Caco-2 (cell line): ENCODE measurements at regions of chr2 and their contacts with region 1.

Region 1: GRCh38 chr2:25878361-25879132 is at the start of gene ASXL2:
- DNase-seq: peak; percentile 98 to 99
- H3K4me3 ChIP-seq: peak within 1 kb of the TSS; percentile 65
- H3K4me3 Mint-ChIP-seq: peak within 1 kb of the TSS; percentile 99
- H3K27ac Mint-ChIP-seq: peak within 1 kb of the TSS; percentile 99
- H3K4me1 ChIP-seq: peaks cover 6% of the 10 kb centered on the region
- H3K4me1 Mint-ChIP-seq: peaks cover 30% of the 10 kb centered on the region
- H3K27me3 ChIP-seq: no peaks in the 10 kb centered on the region
- H3K27me3 Mint-ChIP-seq: no peaks in the 10 kb centered on the region
- CTCF ChIP-seq: no peak
- total RNA-seq, gene ASXL2: 35.7 and 41.1 TPM in 2 replicates

Region 2: DNA sequence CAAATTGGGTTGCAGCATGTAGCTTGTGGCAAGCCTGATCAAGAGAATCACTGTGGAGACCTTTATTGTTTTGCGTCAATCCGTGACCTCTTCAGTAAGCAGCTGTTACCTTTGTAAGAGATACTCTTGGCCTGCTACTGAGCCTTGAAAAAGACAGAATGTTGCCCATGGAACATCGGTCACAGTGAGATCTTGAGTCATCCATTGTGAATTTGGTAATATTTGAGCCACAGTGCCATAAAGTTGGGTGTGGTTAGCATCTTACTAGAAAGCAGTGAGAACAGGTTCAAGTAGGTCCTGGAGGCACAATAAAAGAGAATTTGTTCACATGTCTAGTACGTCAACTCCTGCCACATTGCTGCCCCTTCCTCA is 849.4 kb before region 1 on chr2:
- CTCF ChIA-PET with region 1: no interaction called
- POLR2A ChIA-PET with region 1: no interaction called
- intact Hi-C with region 1: no loop called
- DNase-seq: no peak
- H3K4me3 ChIP-seq: no peak overlapping the region
- H3K4me3 Mint-ChIP-seq: no peak overlapping the region
- H3K27ac Mint-ChIP-seq: no peak overlapping the region
- H3K4me1 ChIP-seq: no peaks in the 10 kb centered on the region
- H3K4me1 Mint-ChIP-seq: no peaks in the 10 kb centered on the region
- H3K27me3 ChIP-seq: no peaks in the 10 kb centered on the region
- H3K27me3 Mint-ChIP-seq: no peaks in the 10 kb centered on the region
- CTCF ChIP-seq: no peak

Region 3: GRCh38 chr2:25867396-25868003 is 11.0 kb before region 1 on chr2:
- CTCF ChIA-PET with region 1: no interaction called
- POLR2A ChIA-PET with region 1: interaction called, 14 read pairs
- intact Hi-C with region 1: no loop called
- DNase-seq: no peak
- H3K4me3 ChIP-seq: no peak overlapping the region
- H3K4me3 Mint-ChIP-seq: no peak overlapping the region
- H3K27ac Mint-ChIP-seq: peak overlapping the region; percentile 3
- H3K4me1 ChIP-seq: no peaks in the 10 kb centered on the region
- H3K4me1 Mint-ChIP-seq: no peaks in the 10 kb centered on the region
- H3K27me3 ChIP-seq: no peaks in the 10 kb centered on the region
- H3K27me3 Mint-ChIP-seq: no peaks in the 10 kb centered on the region
- CTCF ChIP-seq: no peak

Region 4: DNA sequence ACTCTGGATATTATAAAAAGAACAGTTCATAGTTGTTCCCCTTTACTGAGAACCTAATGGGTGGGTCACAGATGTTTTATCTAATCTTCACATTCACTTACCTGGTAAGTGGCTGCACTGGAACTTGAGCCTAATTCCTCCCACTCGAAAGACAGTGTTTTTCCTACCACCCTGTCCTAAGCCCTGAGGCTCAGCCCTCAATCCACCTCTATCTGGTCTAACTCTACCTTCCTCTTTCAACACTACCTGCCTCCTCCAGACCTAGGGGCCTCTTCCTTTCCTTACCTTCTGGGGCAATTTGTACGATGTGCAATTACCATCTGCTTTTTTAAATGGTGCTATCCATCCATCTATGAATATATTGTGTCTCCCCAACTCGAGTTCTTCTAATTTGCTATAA is 113.4 kb after region 1 on chr2:
- CTCF ChIA-PET with region 1: interaction called, 10 read pairs
- POLR2A ChIA-PET with region 1: interaction called, 3 read pairs
- intact Hi-C with region 1: no loop called
- DNase-seq: no peak
- H3K4me3 ChIP-seq: no peak overlapping the region
- H3K4me3 Mint-ChIP-seq: no peak overlapping the region
- H3K27ac Mint-ChIP-seq: peak overlapping the region; percentile 5
- H3K4me1 ChIP-seq: peaks cover 12% of the 10 kb centered on the region
- H3K4me1 Mint-ChIP-seq: peaks cover 23% of the 10 kb centered on the region
- H3K27me3 ChIP-seq: no peaks in the 10 kb centered on the region
- H3K27me3 Mint-ChIP-seq: no peaks in the 10 kb centered on the region
- CTCF ChIP-seq: no peak

Region 5: DNA sequence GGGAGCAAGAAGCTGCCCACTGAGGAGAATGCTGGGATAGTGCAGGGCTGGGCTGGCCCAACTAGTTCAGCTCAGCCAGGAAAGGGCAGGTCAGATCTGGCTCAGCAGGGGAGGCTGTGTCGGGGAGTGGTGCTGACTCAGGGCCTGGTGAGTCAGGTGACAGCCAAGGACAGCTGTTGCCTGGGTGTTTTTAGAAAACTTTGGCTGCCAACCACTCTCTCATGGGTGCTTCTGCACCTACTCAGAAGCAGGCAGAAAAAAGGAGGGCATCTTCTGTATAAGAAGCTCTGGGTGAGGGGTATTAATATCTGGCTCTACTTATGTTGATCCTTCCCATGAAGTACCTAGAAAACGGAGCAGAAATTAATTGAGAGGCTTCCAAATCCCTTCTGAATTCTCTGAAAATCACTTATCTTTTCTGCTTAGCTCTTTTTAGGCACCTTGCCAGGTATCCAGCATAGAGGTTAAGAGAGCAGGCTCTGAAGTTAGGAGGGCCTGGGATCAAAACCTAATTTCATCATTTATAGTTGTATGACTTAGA is 139.7 kb after region 1 on chr2:
- CTCF ChIA-PET with region 1: no interaction called
- POLR2A ChIA-PET with region 1: no interaction called
- intact Hi-C with region 1: loop called (anchors 10 kb)
- DNase-seq: peak; percentile 76 to 78
- H3K4me3 ChIP-seq: no peak overlapping the region
- H3K4me3 Mint-ChIP-seq: no peak overlapping the region
- H3K27ac Mint-ChIP-seq: peak overlapping the region; percentile 87
- H3K4me1 ChIP-seq: peaks cover 34% of the 10 kb centered on the region
- H3K4me1 Mint-ChIP-seq: peaks cover 42% of the 10 kb centered on the region
- H3K27me3 ChIP-seq: no peaks in the 10 kb centered on the region
- H3K27me3 Mint-ChIP-seq: no peaks in the 10 kb centered on the region
- CTCF ChIP-seq: no peak

Region 6: GRCh38 chr2:26345545-26346453 is 467.3 kb after region 1 on chr2 and contains the start of gene SELENOI:
- CTCF ChIA-PET with region 1: no interaction called
- POLR2A ChIA-PET with region 1: interaction called, 3 read pairs
- intact Hi-C with region 1: loop called (anchors 10 kb)
- DNase-seq: peak; percentile 99 to 100
- H3K4me3 ChIP-seq: peak within 1 kb of the TSS; percentile 66
- H3K4me3 Mint-ChIP-seq: peak within 1 kb of the TSS; percentile 100
- H3K27ac Mint-ChIP-seq: peak within 1 kb of the TSS; percentile 100
- H3K4me1 ChIP-seq: peaks cover 29% of the 10 kb centered on the region
- H3K4me1 Mint-ChIP-seq: peaks cover 26% of the 10 kb centered on the region
- H3K27me3 ChIP-seq: no peaks in the 10 kb centered on the region
- H3K27me3 Mint-ChIP-seq: no peaks in the 10 kb centered on the region
- CTCF ChIP-seq: no peak
- total RNA-seq, gene SELENOI: 61.3 and 68.9 TPM in 2 replicates